ENCODE measurements at regions of chr19 and their contacts with region 1.

Region 1: GRCh38 chr19:33406521-33407139 is 33.1 kb downstream of the CEBPG start:
- DNase-seq: peak; percentile 83
- H3K4me3 ChIP-seq: no peak overlapping the region
- H3K27ac ChIP-seq: no peak overlapping the region
- H3K4me1 ChIP-seq: peaks cover 0 to 18% (median 6%) of the 10 kb centered on the region in 4 donors
- H3K27me3 ChIP-seq: no peaks in the 10 kb centered on the region
- CTCF ChIP-seq: peak; percentile 86 to 97 (median 94)
- EP300 ChIP-seq: no peak
- POLR2A ChIP-seq: no peak

Region 2: DNA sequence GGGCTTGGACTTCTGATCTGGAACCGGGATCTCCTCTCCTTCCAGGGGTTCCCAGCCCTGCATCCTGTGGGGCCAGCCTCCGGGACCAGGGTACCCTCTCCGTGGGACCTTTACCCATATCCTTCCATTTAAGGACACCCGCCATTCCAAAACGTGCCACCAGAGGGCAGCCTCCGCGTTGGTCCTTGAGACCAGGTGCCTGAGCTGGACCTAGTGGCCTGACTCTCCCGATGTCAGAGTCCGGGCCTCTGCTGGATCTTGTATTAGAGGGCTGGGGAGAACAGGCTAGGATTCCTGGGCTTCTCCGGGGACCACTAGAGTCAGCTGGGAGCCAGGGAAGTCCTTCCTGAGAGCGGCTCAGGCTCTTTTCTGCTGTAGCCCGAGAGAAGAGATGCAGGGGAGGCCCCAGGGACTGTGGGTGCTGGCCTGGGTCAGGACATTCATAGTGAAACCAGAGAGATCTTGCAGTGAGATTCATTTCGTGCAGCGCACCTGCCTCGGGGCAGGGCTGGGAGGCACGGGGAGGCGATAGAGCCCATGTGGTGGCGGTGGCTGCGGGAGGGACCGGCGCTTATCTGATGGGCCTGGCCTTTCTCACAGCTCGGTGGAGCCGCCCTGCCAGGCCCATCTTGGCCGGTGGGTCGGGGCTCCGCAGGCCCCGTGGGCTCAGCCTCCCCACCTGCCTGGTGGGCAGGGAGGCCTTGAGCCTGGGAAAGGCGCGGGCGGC is 171.2 kb before region 1 on chr19:
- intact Hi-C with region 1: loop called (anchors 2 kb)
- DNase-seq: peak; percentile 85
- H3K4me3 ChIP-seq: no peak overlapping the region
- H3K27ac ChIP-seq: no peak overlapping the region
- H3K4me1 ChIP-seq: no peaks in the 10 kb centered on the region
- H3K27me3 ChIP-seq: peaks cover 0 to 23% (median 12%) of the 10 kb centered on the region in 3 donors
- CTCF ChIP-seq: peak; percentile 76 to 90 (median 84)
- EP300 ChIP-seq: no peak
- POLR2A ChIP-seq: no peak

Region 3: DNA sequence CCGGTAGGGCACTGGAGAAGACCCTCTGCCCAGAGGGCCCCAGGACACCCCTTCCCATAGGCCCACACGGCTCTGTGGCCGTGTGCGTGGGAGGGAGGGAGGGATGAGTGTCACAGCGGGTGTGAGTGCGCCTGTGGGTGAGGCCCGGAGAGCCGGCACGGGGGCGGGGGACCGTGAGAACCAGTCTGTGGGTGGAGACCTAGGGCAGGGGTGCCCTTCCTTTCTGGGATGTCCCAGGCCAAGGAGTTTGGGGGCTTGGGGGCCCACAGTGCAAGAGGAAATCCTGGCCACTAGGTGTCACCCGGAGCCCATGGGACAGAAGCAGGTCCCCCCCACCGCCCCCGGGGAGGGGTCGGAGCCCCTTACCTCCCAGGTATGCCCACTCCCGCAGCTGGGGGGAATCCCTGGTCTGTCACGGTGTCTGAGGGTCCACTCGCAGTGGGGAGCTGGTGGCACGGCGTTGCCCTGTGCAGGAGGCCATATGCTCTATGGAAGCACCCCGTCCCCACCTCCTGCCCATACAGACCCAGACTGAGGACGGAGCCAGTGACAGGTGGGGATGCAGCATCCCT is 165.0 kb before region 1 on chr19:
- intact Hi-C with region 1: loop called (anchors 1 kb)
- DNase-seq: no peak
- H3K4me3 ChIP-seq: no peak overlapping the region
- H3K27ac ChIP-seq: no peak overlapping the region
- H3K4me1 ChIP-seq: peaks cover 0 to 9% (median 7%) of the 10 kb centered on the region in 4 donors
- H3K27me3 ChIP-seq: peaks cover 0 to 14% (median 0%) of the 10 kb centered on the region in 3 donors
- CTCF ChIP-seq: peak; percentile 70 to 88 (median 82)
- EP300 ChIP-seq: no peak
- POLR2A ChIP-seq: no peak

Region 4: DNA sequence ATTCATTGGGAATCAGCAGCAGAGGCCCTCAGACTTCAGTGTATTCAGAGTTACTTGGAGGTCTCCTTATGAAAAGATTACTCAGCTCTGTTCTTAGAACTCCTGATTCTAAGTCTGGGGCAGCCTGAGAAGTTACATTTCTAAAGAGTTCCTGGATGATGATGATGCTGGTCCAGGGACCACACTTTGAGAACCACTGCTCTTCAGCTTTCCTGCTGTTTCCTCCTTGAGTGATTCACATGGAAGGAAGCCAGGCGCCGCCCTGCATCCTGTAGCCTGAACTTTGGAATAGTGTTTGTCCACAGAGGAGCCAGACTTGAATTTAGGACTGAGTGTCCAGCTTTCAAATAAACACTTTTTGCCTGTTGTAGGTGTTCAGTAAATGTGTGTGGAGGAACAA is 30.2 kb before region 1 on chr19:
- intact Hi-C with region 1: no loop called
- DNase-seq: peak; percentile 87
- H3K4me3 ChIP-seq: no peak overlapping the region
- H3K27ac ChIP-seq: peak overlapping the region; percentile 7 to 100 (median 95)
- H3K4me1 ChIP-seq: peaks cover 0 to 45% (median 32%) of the 10 kb centered on the region in 4 donors
- H3K27me3 ChIP-seq: no peaks in the 10 kb centered on the region
- CTCF ChIP-seq: no peak
- EP300 ChIP-seq: no peak
- POLR2A ChIP-seq: no peak

Region 5: GRCh38 chr19:33553530-33554310 is 147.1 kb after region 1 on chr19:
- intact Hi-C with region 1: no loop called
- DNase-seq: peak; percentile 24
- H3K4me3 ChIP-seq: no peak overlapping the region
- H3K27ac ChIP-seq: no peak overlapping the region
- H3K4me1 ChIP-seq: no peaks in the 10 kb centered on the region
- H3K27me3 ChIP-seq: no peaks in the 10 kb centered on the region
- CTCF ChIP-seq: no peak
- EP300 ChIP-seq: no peak
- POLR2A ChIP-seq: no peak